ENCODE measurements at regions of chr3 and their contacts with region 1.

Region 1: DNA sequence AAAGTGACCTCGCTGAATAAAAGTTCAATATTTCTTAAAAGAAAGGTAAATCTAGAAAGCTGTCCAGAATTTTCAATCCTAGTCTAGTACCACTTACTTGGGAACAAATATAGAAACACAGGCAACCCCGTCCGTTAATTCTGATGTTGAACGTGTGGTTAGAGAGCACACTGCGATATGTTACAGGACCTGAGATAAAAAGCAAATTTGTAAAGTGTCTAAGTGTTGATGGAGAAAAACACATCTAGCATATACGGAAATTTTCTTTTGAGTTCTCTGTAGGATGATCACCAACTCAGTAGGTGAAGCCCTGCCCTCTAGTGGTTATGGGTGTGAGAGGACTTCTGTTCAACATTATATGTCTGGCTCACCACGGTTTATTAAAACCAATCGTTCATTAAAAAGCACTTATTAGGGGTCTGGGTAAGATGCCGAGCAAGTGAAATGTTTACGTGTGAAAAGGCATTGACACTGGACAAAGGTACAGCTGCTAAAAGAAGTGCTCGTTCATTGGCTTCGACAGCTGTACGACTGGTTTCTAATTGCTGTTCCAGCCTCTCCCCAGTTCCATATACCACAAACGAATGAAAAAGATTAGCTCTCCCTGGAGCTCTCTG is 1.0 kb upstream of the ATP2C1 start:
- DNase-seq: peak in 8 of 10 donors; percentile 48 to 85 (median 63)
- H3K4me3 ChIP-seq: peak overlapping the region; percentile 67 to 98 (median 89)
- H3K27ac ChIP-seq: peak overlapping the region; percentile 87 to 99 (median 97)
- H3K27me3 ChIP-seq: no peaks in the 10 kb centered on the region
- CTCF ChIP-seq: peak; percentile 70 to 95 (median 87)

Region 2: GRCh38 chr3:130557336-130558035 is 335.4 kb before region 1 on chr3:
- intact Hi-C with region 1: no loop called
- DNase-seq: no peak
- H3K4me3 ChIP-seq: no peak overlapping the region
- H3K27ac ChIP-seq: no peak overlapping the region
- H3K27me3 ChIP-seq: peaks cover 0 to 4% (median 0%) of the 10 kb centered on the region in 45 donors
- CTCF ChIP-seq: no peak

Region 3: GRCh38 chr3:130746246-130747039 is 146.4 kb before region 1 on chr3 and contains the start of gene PIK3R4:
- intact Hi-C with region 1: loop called in 1 of 2 experiments (anchors 5 kb)
- DNase-seq: peak; percentile 94 to 98 (median 96)
- H3K4me3 ChIP-seq: peak within 1 kb of the TSS; percentile 65 to 100 (median 93)
- H3K27ac ChIP-seq: peak within 1 kb of the TSS in 56 of 59 donors; percentile 5 to 94 (median 80)
- H3K27me3 ChIP-seq: no peaks in the 10 kb centered on the region
- CTCF ChIP-seq: peak in 9 of 56 donors; percentile 10 to 29 (median 20)
- total RNA-seq, gene PIK3R4: 25.7 to 54.3 (median 38.9) TPM

Region 4: GRCh38 chr3:130759699-130760338 is 133.0 kb before region 1 on chr3:
- intact Hi-C with region 1: loop called in 1 of 2 experiments (anchors 5 kb)
- DNase-seq: peak in 3 of 10 donors; percentile 25 to 53 (median 52)
- H3K4me3 ChIP-seq: peak overlapping the region in 4 of 59 donors; percentile 3 to 10 (median 6)
- H3K27ac ChIP-seq: no peak overlapping the region
- H3K27me3 ChIP-seq: no peaks in the 10 kb centered on the region
- CTCF ChIP-seq: peak; percentile 70 to 91 (median 82)

Region 5: GRCh38 chr3:131026321-131027178 is 133.7 kb after region 1 on chr3 and contains the starts of genes ASTE1 and NEK11:
- intact Hi-C with region 1: loop called (anchors 5 to 10 kb)
- DNase-seq: peak; percentile 82 to 93 (median 90)
- H3K4me3 ChIP-seq: peak within 1 kb of the TSS; percentile 65 to 97 (median 85)
- H3K27ac ChIP-seq: peak within 1 kb of the TSS; percentile 48 to 96 (median 85)
- H3K27me3 ChIP-seq: no peaks in the 10 kb centered on the region
- CTCF ChIP-seq: peak in 27 of 56 donors; percentile 6 to 51 (median 28)
- total RNA-seq, gene ASTE1: 3.8 to 19.0 (median 8.2) TPM
- total RNA-seq, gene NEK11: 16.6 to 35.3 (median 22.2) TPM

Region 6: DNA sequence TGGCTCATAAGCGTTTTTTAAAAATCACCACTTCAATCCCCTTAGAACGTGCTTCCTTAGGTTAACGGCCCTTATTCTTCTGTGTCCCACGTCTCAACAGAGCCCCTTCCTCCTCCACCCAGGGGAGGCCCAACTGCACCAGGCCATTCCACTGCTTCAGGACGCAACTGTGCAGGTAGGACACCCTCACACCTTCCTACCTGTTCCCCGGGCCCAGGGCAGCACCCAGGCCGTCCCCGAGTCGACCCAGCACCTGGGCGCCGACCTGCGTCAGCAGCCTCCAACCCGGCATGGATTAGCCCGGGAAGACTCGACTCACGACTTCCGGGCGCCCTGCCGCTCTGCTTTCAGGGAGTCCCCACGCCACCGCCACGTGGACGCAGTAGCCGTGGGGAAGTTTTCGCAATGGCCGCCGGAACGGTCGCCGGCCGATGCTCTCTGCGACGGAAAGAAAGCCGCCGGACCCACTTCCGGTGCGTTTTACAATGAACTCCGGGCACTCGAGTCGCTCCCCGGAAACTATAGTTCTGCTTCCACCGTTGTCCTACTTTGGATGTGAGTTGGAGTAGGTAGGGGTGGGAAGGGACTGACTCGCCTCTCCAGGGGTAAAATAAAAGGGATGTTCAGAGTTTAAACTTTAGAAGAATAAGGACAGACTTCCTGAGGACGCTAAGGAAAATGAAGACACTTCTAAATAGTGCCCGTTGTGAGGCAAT is 609.8 kb after region 1 on chr3 and contains the start of gene MRPL3:
- intact Hi-C with region 1: loop called in 1 of 2 experiments (anchors 10 kb)
- DNase-seq: peak; percentile 74 to 91 (median 86)
- H3K4me3 ChIP-seq: peak within 1 kb of the TSS; percentile 47 to 100 (median 91)
- H3K27ac ChIP-seq: peak within 1 kb of the TSS in 51 of 59 donors; percentile 0 to 85 (median 64)
- H3K27me3 ChIP-seq: peaks cover 0 to 8% (median 0%) of the 10 kb centered on the region in 45 donors
- CTCF ChIP-seq: peak in 35 of 56 donors; percentile 3 to 60 (median 29)
- total RNA-seq, gene MRPL3: 24.9 to 63.5 (median 46.5) TPM

Measured in dorsolateral prefrontal cortex (tissue), 120 donors.